ENCODE measurements at regions of chr11 and their contacts with region 1.

Region 1: GRCh38 chr11:37203006-37203405 is 605.0 kb upstream of the RAG2 start:
- H3K4me3 ChIP-seq: no peak overlapping the region
- H3K27ac ChIP-seq: no peak overlapping the region
- H3K4me1 ChIP-seq: no peaks in the 10 kb centered on the region
- CTCF ChIP-seq: no peak

Region 2: DNA sequence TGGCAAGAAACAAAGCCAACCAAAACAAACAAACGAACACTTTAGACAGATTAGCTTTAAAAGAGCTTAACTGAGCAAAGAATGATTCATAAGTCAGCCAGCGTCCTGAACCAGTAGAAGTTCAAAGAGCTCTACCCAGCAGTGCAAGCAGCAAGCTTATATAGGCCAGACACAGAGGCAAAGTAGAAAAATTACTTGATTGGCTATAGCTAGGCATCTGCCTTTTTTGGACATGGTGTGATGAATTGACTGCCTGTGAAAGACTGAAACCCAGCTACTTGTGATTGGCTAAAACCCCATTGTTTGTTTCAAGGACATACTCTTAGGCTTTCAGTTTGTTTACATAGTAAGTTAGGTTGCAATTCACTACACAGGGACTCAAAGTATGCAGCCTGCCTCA is 1515.1 kb after region 1 on chr11:
- CTCF ChIA-PET with region 1: no interaction called
- POLR2A ChIA-PET with region 1: interaction called, 10 read pairs
- H3K4me3 ChIP-seq: no peak overlapping the region
- H3K27ac ChIP-seq: no peak overlapping the region
- H3K4me1 ChIP-seq: no peaks in the 10 kb centered on the region
- CTCF ChIP-seq: no peak